Activated naive CD4-positive, alpha-beta T cell treated with anti-CD3 and anti-CD28 coated beads for 36 hours (primary cell): ENCODE measurements at regions of chr19 and their contacts with region 1.

Region 1: GRCh38 chr19:58305065-58305931 is at the start of gene ERVK3-1:
- DNase-seq: peak; percentile 95
- H3K4me3 Mint-ChIP-seq: peak within 1 kb of the TSS; percentile 100
- H3K27ac Mint-ChIP-seq: peak within 1 kb of the TSS; percentile 99
- H3K4me1 Mint-ChIP-seq: peaks cover 46% of the 10 kb centered on the region
- H3K27me3 Mint-ChIP-seq: no peaks in the 10 kb centered on the region
- total RNA-seq, gene ERVK3-1: 24.5 to 27.7 TPM

Region 2: DNA sequence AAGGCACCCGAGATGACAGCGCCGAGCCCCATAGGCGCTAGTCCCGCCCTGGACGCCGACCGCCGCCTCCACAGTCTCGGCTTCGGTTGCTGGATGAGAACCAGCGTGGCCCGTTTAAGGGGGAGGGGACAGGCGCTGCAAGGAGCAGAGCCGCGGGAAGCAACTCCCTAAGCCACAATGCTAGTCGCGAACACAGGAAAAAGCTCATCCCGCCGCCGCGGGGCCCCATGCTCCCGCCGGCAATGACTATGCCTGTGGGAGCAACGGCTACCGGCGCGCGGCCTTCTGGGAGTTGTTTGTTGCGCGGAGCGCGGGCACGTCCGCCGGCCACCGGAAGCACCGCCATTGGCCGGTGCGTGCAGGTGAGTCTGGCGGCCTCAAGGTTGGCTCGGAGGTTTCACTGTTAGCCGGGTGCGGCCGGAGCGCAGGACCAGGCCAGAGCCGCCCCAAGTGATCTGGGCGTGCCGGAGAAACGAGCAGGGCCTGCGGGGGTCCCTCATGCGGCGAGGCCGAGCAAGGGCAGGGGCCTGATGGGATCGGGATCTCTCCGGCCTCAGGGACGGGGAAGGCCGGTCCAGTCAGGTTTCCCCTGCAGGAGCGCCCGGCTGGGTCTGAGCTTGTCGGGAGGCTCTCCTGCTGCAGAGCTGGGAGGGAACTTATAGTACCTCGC is 76.6 kb before region 1 on chr19 and contains the start of gene ZNF544:
- CTCF ChIA-PET with region 1: interaction called, 5 read pairs
- intact Hi-C with region 1: loop called (anchors 1 kb)
- DNase-seq: peak; percentile 76
- H3K4me3 Mint-ChIP-seq: peak within 1 kb of the TSS; percentile 94
- H3K27ac Mint-ChIP-seq: peak within 1 kb of the TSS; percentile 92
- H3K4me1 Mint-ChIP-seq: peaks cover 29% of the 10 kb centered on the region
- H3K27me3 Mint-ChIP-seq: no peaks in the 10 kb centered on the region
- total RNA-seq, gene ZNF544: 32.4 to 35.4 TPM